ENCODE measurements at regions of chr13 and their contacts with region 1.

Region 1: GRCh38 chr13:22757530-22758120 is 423.2 kb upstream of the SGCG start:
- DNase-seq: no peak
- ATAC-seq: no peak
- H3K4me3 ChIP-seq: no peak overlapping the region
- H3K27ac ChIP-seq: no peak overlapping the region
- H3K4me1 ChIP-seq: no peaks in the 10 kb centered on the region
- H3K27me3 ChIP-seq: peaks cover 0 to 2% of the 10 kb centered on the region in 2 donors

Region 2: DNA sequence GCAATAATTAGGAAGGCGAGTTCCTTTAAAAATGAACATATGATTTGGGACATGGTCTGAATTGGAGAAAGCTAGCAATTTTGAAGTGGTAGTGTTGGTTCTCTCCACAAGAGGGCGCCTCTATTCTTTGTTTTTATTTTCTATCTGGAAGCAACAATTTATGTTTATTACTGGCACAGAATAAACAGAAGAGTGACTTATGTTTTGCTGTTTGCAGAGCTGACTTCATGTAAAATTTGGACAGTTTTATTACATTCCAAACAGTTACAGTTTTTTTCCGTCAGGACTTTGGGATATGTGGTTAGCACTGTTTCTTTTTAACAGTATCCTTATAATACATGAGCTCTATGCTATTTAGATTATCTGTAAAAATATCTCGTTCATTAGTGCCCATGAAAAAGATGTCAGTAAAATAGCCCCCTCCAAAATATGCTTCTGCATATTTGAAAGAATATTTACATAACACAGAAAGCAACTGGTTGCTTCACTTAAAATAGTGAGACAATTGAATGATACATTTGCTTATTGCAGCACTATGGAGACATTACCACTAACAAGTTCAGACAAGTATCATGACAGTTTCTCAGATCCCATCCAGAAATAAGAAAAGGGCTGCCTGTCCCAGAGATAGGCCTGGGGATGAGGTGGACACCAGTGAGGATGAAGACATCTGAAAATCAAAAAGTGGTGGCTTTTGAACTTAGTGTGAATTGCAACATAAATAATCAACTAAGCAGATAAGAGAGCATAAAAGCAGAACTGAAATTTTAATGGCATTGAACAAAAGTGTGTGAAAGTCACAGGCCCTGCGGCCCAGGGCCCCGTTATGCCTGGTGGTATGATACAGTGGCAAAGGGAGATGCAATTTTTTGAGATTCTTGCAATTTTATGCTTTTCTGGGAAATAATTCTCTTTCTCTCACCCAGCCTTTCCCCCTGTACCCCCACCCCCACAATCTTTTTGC is 1119.0 kb before region 1 on chr13:
- intact Hi-C with region 1: loop called (anchors 5 to 10 kb)
- DNase-seq: no peak
- ATAC-seq: peak; percentile 59
- H3K4me3 ChIP-seq: no peak overlapping the region
- H3K27ac ChIP-seq: no peak overlapping the region
- H3K4me1 ChIP-seq: no peaks in the 10 kb centered on the region
- H3K27me3 ChIP-seq: no peaks in the 10 kb centered on the region

Region 3: GRCh38 chr13:22103044-22104027 is 654.3 kb before region 1 on chr13:
- intact Hi-C with region 1: loop called in 1 of 2 experiments (anchors 5 kb)
- DNase-seq: no peak
- ATAC-seq: no peak
- H3K4me3 ChIP-seq: no peak overlapping the region
- H3K27ac ChIP-seq: no peak overlapping the region
- H3K4me1 ChIP-seq: no peaks in the 10 kb centered on the region
- H3K27me3 ChIP-seq: no peaks in the 10 kb centered on the region

Region 4: DNA sequence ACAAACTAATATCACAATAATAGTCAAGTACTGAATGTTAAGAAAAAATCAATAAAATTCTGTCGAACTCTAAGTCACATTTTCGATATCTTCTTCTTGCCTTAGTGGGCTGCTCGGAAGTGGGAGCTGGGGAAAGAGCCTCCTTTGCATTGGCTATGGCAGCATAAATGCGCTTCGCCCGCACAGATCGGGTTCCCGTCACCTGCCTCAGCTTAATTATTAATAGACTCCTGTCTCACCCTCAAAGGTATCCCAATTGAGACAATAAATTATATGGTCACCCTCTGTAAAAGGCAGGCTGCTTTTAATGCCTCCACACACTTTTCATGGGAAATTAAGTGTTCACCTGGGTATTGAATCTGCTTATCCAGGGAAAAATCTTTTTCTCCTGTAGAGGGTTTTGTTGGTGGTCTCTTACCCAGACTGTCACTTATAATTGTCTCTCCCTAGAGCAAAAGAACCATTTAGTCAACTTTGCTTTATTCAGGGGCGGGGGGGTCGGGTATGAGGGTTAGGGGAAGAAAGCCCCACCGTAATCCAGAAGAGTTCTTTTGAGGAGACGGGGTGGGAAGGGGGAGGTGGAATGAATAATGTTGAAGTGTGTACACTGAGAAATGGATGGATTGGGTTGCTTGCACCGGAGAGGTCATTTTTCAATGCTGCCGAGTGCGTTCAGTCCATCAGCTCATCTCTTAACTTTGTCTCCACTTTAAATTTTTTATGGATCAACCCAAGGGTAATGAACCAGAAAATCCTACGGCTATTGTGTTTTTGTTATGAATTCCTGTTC is 259.4 kb before region 1 on chr13:
- intact Hi-C with region 1: no loop called
- DNase-seq: no peak
- ATAC-seq: no peak
- H3K4me3 ChIP-seq: no peak overlapping the region
- H3K27ac ChIP-seq: no peak overlapping the region
- H3K4me1 ChIP-seq: no peaks in the 10 kb centered on the region
- H3K27me3 ChIP-seq: no peaks in the 10 kb centered on the region

Region 5: GRCh38 chr13:22561581-22561980 is 196.0 kb before region 1 on chr13:
- intact Hi-C with region 1: no loop called
- DNase-seq: no peak
- ATAC-seq: no peak
- H3K4me3 ChIP-seq: no peak overlapping the region
- H3K27ac ChIP-seq: no peak overlapping the region
- H3K4me1 ChIP-seq: no peaks in the 10 kb centered on the region
- H3K27me3 ChIP-seq: no peaks in the 10 kb centered on the region

Measured in aorta (tissue), 5 donors.